ENCODE measurements at regions of chr2 and their contacts with region 1.

Region 1: GRCh38 chr2:20446917-20447436 is at the start of gene RHOB:
- DNase-seq: peak; percentile 99
- H3K4me3 ChIP-seq: peak within 1 kb of the TSS; percentile 66 to 96 (median 94)
- H3K27ac ChIP-seq: peak within 1 kb of the TSS; percentile 79
- H3K4me1 ChIP-seq: peaks cover 27% of the 10 kb centered on the region
- H3K27me3 ChIP-seq: no peaks in the 10 kb centered on the region
- CTCF ChIP-seq: no peak
- POLR2A ChIP-seq: peak; percentile 100
- total RNA-seq, gene RHOB: 830 and 937 TPM in 2 replicates

Region 2: DNA sequence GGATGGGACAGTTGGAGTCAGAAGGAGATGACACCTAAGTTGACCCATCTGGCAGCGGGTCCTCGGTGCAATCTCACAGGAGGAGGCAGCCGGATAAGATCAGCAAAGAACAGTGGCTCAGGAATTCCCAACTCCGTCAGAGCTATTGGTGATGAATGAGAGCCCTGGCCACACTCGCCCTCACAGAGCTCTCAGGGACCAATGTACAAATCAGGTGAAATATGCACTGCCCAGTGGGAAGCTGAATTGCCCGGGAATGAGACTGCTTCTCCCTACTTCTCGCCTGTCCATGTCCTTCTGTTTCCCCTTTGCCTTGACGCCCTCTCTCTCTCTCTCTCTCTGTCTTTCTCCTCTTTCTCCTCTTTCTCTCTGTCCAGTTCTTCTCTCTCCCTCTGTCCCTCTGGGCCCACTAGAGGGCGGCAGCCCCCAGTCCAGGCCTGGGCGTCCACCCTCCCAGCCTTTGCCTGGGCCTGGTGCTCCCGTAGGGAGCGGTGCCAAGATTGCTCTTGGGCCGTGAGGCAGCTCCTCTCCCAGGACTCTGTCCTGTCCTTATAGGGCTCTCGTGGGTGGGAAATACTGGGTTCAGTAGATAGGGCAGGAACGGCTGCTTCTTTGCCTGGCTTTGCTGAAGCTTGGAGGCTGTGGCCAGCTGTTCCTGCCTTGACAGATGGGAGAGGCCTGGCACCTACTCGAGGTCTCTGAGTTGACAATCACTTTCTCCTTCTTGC is 68.0 kb before region 1 on chr2:
- CTCF ChIA-PET with region 1: interaction called, 27 read pairs
- POLR2A ChIA-PET with region 1: interaction called, 4 read pairs
- dilution Hi-C with region 1: no loop called
- intact Hi-C with region 1: no loop called
- DNase-seq: peak; percentile 78
- H3K4me3 ChIP-seq: no peak overlapping the region
- H3K27ac ChIP-seq: no peak overlapping the region
- H3K4me1 ChIP-seq: no peaks in the 10 kb centered on the region
- H3K27me3 ChIP-seq: peaks cover 6 to 9% of the 10 kb centered on the region in 2 experiments
- CTCF ChIP-seq: peak; percentile 87 to 89
- POLR2A ChIP-seq: no peak

Region 3: DNA sequence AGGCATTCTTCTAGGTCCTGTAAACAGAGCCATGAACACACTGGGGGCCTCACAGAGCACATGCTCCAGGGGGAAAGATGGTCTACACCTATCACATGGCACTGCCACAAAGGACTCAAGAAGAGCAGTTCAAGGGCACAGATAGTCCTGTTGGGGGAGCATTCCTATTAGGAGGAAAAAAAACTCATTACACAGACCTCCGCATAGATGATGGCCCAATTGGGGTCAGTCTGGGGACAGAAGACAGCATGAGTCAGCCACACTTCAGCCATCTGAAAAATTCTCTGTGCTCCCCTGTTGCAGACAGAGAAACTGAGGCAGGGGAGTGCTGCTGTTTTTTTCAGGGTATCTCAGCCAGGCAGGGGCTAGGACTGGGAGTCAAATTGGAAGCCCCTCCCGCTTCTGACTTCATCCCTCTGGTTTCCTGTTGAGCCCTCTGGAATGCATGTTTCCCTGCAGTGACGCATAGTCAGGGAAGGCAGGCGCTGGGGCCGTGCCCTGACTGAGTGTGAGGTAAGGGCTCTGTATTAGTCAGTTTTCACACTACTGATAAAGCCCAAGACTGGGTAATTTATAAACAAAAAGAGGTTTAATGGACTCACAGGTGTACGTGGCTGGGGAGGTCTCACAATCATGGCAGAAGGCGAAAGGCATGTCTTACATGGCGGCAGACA is 67.8 kb after region 1 on chr2:
- CTCF ChIA-PET with region 1: interaction called, 3 read pairs
- POLR2A ChIA-PET with region 1: interaction called, 5 read pairs
- dilution Hi-C with region 1: no loop called
- intact Hi-C with region 1: loop called (anchors 1 kb)
- DNase-seq: peak; percentile 99
- H3K4me3 ChIP-seq: peak overlapping the region in 1 of 3 experiments; percentile 15
- H3K27ac ChIP-seq: peak overlapping the region; percentile 100
- H3K4me1 ChIP-seq: peaks cover 21% of the 10 kb centered on the region
- H3K27me3 ChIP-seq: no peaks in the 10 kb centered on the region
- CTCF ChIP-seq: no peak
- POLR2A ChIP-seq: no peak

Region 4: DNA sequence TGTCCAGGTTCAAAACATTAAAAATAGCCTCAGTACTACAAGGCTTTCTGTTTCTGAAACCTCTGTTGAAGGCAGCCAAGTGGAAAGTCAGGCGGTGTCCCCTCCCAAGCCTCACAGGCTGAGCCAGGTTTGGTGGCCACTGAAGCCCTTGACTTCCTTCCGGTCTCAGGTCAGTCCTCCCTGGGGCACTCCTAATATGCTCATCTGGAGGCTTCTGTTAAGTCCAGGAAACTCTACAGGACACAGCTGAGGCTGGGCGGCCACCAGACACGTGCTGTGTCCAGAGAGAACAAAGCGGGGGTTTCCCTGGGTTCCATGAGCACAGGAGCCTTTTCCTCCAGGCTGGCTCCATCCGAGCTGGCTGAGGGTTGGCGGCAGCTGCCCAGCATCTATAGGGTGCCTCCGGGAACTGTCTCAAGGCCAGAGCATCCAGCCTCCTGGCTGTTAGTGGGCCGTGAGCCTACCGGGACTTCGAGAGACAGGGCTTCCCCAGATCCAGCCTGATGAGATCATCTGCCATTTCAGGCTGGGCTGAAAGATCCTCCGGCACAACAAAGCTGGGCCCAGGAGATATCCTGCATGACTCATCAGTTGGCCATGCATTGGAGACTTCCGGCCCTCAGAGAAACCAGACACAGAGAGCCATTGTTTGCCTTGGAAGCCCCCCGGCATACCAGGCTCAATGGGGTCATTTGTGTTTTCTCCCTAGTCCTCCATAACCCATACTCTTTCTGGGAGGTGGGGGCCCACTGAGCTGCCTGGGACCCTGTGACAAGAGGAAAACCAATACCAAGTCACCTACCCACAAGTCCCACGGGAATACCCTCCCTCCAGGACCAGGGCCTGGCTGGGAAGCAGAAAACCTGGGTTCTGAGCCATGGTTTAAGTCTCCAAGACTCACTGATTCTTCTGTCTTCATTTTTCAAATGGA is 132.2 kb after region 1 on chr2:
- CTCF ChIA-PET with region 1: interaction called, 78 read pairs
- POLR2A ChIA-PET with region 1: interaction called, 310 read pairs
- dilution Hi-C with region 1: no loop called
- intact Hi-C with region 1: loop called (anchors 1 kb)
- DNase-seq: peak; percentile 100
- H3K4me3 ChIP-seq: no peak overlapping the region
- H3K27ac ChIP-seq: peak overlapping the region; percentile 100
- H3K4me1 ChIP-seq: peaks cover 84% of the 10 kb centered on the region
- H3K27me3 ChIP-seq: no peaks in the 10 kb centered on the region
- CTCF ChIP-seq: no peak
- POLR2A ChIP-seq: no peak

Region 5: DNA sequence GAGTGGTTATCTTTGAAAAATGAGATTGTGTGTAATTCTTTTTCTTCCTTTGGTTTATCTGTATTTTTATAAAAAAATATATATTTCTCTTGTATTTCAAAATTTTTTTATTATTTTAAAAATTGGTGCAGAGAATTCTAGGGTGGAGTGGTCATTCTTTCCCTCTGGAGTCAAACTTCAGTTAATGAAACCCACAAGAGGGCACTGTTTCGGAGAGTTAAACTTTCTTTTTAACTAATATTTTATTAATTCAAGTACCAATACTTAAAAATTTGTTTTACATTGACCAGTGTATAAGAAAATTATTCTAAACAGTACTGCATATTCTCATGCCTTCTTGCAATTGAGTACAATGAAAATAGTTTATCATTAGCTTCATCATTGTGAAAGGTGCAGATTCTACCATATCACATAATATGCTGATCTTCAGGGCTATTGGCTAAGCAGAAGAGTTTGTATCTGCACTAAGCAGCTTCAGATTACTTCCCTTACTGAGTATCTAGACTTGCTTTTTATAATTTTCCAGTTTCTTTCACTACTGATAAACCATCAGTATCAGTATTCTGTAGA is 153.9 kb after region 1 on chr2:
- CTCF ChIA-PET with region 1: interaction called, 30 read pairs
- POLR2A ChIA-PET with region 1: interaction called, 38 read pairs
- dilution Hi-C with region 1: no loop called
- intact Hi-C with region 1: loop called (anchors 1 kb)
- DNase-seq: peak; percentile 71
- H3K4me3 ChIP-seq: no peak overlapping the region
- H3K27ac ChIP-seq: peak overlapping the region; percentile 35
- H3K4me1 ChIP-seq: peaks cover 44% of the 10 kb centered on the region
- H3K27me3 ChIP-seq: no peaks in the 10 kb centered on the region
- CTCF ChIP-seq: peak in 1 of 2 donors; percentile 16
- POLR2A ChIP-seq: no peak

Region 6: DNA sequence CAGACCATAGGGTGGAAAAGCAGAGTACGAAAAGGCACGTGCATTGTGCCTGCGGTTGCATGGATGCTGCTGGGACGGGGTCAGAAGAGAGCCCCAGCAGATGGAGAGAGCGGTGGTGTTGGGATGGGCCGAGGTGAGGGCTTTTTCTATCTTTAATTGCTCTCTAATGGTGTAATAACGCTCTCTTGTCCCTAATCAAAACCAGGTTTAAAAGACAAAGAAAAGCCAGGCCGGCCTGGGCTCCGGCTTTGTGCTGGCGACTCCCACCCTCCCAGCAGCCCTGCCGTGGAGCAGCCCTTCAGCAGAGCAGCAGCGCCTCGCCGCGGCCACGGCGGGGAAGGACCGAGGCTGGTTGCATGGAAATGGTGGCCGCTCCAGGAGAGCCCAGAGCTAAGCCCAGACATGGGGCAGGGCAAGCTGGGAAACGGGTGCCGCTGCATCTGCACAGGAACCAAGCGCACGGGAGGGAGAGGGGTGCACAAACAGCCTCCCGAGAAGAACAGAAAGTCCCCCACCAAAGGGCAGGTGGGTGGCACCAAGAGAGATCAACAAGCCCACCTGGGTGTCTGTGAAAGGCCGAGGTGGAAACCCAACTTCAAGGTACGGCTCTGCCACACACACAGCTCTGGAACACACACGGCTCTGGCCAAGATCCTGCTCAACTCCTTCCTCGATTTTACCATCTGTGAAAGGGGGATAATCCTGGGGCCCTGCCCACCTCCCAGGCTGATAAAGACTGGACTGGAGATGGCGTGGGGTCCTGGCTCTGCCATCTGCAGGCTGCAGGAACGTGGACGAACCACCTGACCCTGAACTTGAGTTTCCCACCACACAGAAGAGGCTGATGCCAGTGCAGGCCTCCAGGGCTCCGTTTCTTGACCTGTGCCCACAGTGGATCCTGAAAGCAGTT is 189.0 kb after region 1 on chr2:
- CTCF ChIA-PET with region 1: interaction called, 86 read pairs
- POLR2A ChIA-PET with region 1: interaction called, 50 read pairs
- dilution Hi-C with region 1: loop called (anchors 10 kb)
- intact Hi-C with region 1: loop called (anchors 1 kb)
- DNase-seq: peak; percentile 84
- H3K4me3 ChIP-seq: no peak overlapping the region
- H3K27ac ChIP-seq: peak overlapping the region; percentile 72
- H3K4me1 ChIP-seq: peaks cover 20% of the 10 kb centered on the region
- H3K27me3 ChIP-seq: no peaks in the 10 kb centered on the region
- CTCF ChIP-seq: peak; percentile 96 to 99
- POLR2A ChIP-seq: no peak

Region 7: DNA sequence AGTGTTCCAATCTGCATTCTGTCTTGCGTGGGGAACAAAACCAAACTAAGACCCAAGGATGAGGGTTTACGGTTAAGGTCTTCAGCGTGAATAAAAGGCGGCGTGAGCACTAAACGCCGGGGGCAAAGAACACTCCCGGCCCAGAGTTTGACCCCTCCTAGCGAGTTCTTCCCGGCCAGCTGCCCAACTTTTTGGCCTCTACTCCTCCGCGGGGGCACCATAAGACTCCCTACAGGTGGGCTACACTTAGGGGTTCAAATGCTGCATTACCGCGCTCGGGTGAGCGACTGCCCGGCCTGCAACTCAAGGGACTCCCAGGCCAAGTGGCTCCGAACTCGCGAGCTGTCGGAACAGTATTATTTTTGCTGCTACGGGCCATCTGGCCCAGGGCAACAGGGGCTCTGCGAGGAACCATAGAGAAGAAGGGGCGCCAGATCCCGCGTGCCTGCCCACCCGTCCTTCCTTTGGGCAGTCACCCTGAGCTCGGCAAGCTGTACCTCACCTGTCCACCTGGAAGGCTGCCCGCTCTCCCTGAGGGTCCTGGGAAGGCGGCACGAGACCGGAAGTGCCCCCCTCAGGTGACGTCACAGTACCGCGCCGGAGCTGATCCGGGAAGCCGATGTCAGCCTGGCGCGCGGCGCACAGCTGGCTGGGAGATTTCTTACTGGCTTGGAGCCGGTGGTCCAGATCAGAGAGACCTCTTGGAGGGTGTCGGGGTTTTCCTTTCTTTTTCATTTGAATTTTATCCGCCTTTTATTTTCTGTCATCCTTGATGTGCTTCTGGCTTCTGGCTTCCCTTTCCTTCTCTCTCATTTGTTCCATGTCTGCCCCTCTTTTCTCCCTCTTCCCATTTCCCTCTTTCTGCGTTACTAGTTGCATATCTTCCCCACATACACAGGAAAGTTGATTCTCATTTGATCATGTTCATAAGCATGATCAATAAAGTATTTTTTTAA is 375.8 kb after region 1 on chr2 and contains the start of gene LDAH:
- CTCF ChIA-PET with region 1: no interaction called
- POLR2A ChIA-PET with region 1: no interaction called
- dilution Hi-C with region 1: no loop called
- intact Hi-C with region 1: loop called (anchors 10 kb)
- DNase-seq: peak; percentile 87
- H3K4me3 ChIP-seq: peak within 1 kb of the TSS; percentile 51 to 89 (median 66)
- H3K27ac ChIP-seq: peak within 1 kb of the TSS; percentile 72
- H3K4me1 ChIP-seq: no peaks in the 10 kb centered on the region
- H3K27me3 ChIP-seq: peaks cover 0 to 2% of the 10 kb centered on the region in 2 experiments
- CTCF ChIP-seq: no peak
- POLR2A ChIP-seq: peak; percentile 90
- total RNA-seq, gene LDAH: 24.0 and 24.2 TPM in 2 replicates

Measured in endothelial cell of umbilical vein (primary cell).